K562 (cell line): ENCODE measurements at regions of chr5 and their contacts with region 1.

Region 1: DNA sequence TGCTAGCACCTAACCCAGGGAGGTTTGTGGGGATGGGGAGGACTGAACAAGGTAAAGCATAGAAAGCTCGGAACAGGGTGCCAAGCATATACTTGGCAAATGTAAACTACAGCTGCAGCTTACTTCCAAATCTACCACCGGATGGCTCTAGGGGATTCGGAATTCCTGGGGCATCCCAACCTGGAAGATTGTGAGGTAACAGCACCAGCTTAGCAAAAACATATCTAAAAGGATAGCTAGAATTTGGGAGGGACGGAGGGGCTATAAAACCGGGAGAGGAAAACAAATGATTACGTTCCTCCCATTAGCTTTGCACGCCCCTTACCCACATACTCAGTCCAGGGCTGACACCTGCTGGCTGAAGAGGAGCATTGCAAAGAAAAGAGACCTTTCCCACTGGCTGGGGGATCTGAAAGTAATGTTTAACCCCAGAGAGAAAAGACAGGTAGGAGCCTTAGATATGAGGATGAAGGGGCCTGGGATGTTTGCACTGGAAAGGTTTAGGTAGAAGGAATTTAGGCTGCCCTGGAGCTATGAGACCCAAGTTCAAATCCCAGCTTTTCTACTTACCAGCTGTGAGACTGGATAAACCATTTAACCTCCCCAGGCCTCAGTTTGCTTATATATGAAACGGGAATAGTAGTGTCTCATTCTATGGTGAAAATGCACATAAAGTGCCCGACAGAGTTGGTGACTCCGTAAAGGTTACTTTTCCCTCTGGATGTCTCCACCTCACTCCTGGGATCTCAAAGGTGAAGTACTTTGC is 73.6 kb downstream of the FAM114A2 start:
- DNase-seq: peak; percentile 70 to 80 (median 78)
- ATAC-seq: peak; percentile 90
- H3K4me3 ChIP-seq: no peak overlapping the region
- H3K27ac ChIP-seq: no peak overlapping the region
- H3K4me1 ChIP-seq: no peaks in the 10 kb centered on the region
- H3K27me3 ChIP-seq: peaks cover 0 to 20% of the 10 kb centered on the region in 2 experiments; a peak in 3 of 5 replicates
- CTCF ChIP-seq: peak; percentile 78 to 93 (median 85)
- EP300 ChIP-seq: no peak
- POLR2A ChIP-seq: no peak
- RAD21 ChIP-seq: peak; percentile 90 to 94

Region 2: GRCh38 chr5:152532714-152533113 is 1432.3 kb before region 1 on chr5:
- CTCF ChIA-PET with region 1: interaction called, 9 read pairs
- POLR2A ChIA-PET with region 1: interaction called, 3 read pairs
- in situ Hi-C with region 1: loop called (anchors 10 kb)
- intact Hi-C with region 1: loop called (anchors 1 kb)
- DNase-seq: peak in 3 of 4 experiments; percentile 10 to 55 (median 10)
- ATAC-seq: peak; percentile 54; the same call in 1 of the 3 replicates
- H3K4me3 ChIP-seq: no peak overlapping the region
- H3K27ac ChIP-seq: no peak overlapping the region
- H3K4me1 ChIP-seq: no peaks in the 10 kb centered on the region
- H3K27me3 ChIP-seq: no peaks in the 10 kb centered on the region
- CTCF ChIP-seq: peak in 2 of 3 experiments; percentile 31 to 51; a peak in 3 of 6 replicates
- EP300 ChIP-seq: no peak
- POLR2A ChIP-seq: no peak
- RAD21 ChIP-seq: peak; percentile 72 to 83

Region 3: DNA sequence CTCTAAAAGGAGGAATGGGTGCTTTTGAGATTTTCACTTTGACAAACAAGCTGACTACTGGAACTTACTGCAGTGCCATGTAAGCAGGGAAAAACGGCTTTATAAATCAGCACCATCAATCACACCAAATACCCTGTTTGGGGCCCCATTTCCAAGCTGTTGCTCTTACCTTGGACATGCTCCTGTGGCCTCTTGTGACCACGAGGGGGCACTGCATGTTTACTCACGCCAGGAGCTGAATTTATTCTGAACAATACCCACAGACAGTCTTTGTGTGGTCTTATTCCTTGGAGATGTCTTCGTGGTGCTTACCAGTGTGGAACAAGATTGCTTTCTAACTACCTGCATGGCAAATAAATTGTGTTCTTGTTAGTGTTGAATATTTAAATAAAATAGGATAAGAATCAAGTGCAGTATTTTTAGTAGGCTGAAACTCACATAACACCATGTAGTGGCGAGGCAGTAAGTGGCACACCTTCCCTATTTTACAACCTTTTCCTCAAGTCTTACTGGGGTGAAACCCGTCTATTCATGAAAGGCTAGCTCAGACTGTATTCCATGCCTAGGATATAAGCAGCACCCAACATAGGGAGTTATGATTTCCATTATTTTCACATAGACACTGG is 1404.4 kb before region 1 on chr5:
- CTCF ChIA-PET with region 1: no interaction called
- POLR2A ChIA-PET with region 1: no interaction called
- in situ Hi-C with region 1: no loop called
- intact Hi-C with region 1: loop called (anchors 1 kb)
- DNase-seq: peak; percentile 14 to 49 (median 22)
- ATAC-seq: peak; percentile 55; the same call in 1 of the 3 replicates
- H3K4me3 ChIP-seq: no peak overlapping the region
- H3K27ac ChIP-seq: no peak overlapping the region
- H3K4me1 ChIP-seq: no peaks in the 10 kb centered on the region
- H3K27me3 ChIP-seq: no peaks in the 10 kb centered on the region
- CTCF ChIP-seq: peak; percentile 33 to 63 (median 52)
- EP300 ChIP-seq: no peak
- POLR2A ChIP-seq: no peak
- RAD21 ChIP-seq: peak; percentile 44 to 59

Region 4: DNA sequence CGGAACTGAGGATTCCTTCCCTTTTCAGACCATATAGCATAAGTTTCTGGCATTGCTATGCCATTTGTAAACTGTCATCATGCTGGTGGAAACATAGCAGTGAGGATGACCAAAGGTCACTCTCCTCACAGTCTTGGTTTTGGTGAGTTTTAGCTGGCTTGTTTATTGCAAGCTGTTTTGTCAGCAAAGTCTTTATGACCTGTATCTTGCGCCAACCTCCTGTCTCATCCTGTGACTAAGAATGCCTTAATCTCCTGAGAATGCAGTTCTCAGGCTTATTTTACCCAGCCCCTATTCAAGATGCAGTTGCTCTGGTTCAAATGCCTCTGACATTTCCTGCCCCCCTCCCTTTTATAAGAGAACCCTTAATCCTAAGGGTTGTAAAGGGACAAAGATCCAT is 501.3 kb before region 1 on chr5:
- CTCF ChIA-PET with region 1: no interaction called
- POLR2A ChIA-PET with region 1: no interaction called
- in situ Hi-C with region 1: no loop called
- intact Hi-C with region 1: no loop called
- DNase-seq: no peak
- ATAC-seq: no peak
- H3K4me3 ChIP-seq: no peak overlapping the region
- H3K27ac ChIP-seq: no peak overlapping the region
- H3K4me1 ChIP-seq: no peaks in the 10 kb centered on the region
- H3K27me3 ChIP-seq: no peaks in the 10 kb centered on the region
- CTCF ChIP-seq: no peak
- EP300 ChIP-seq: no peak
- POLR2A ChIP-seq: no peak
- RAD21 ChIP-seq: no peak

Region 5: DNA sequence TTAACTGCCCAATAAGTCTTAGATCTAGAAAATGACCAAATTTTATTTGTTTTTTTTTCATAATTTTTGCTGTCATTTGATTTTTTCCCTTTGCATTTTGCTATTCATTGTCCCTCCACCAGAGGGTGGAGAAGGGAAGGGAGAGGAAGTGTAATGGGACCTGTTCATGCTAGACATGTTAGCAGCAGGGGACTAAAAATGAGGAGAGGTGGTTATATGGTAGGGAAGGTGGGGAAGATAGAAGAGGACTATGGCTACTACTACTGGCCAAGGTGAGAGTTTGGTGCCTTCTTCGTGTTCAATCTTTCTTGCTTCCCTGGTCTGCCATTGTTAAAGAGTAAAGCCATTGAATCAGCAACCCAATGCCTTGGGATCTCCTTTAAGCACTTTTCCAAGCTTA is 468.2 kb before region 1 on chr5:
- CTCF ChIA-PET with region 1: interaction called, 11 read pairs
- POLR2A ChIA-PET with region 1: no interaction called
- in situ Hi-C with region 1: no loop called
- intact Hi-C with region 1: loop called (anchors 1 kb)
- DNase-seq: peak; percentile 7 to 20 (median 16)
- ATAC-seq: peak; percentile 37; the same call in 1 of the 3 replicates
- H3K4me3 ChIP-seq: no peak overlapping the region
- H3K27ac ChIP-seq: no peak overlapping the region
- H3K4me1 ChIP-seq: no peaks in the 10 kb centered on the region
- H3K27me3 ChIP-seq: no peaks in the 10 kb centered on the region
- CTCF ChIP-seq: peak; percentile 30 to 60 (median 41); a peak in 4 of 6 replicates
- EP300 ChIP-seq: no peak
- POLR2A ChIP-seq: no peak
- RAD21 ChIP-seq: peak; percentile 70 to 82

Region 6: GRCh38 chr5:153816870-153817269 is 148.2 kb before region 1 on chr5:
- CTCF ChIA-PET with region 1: no interaction called
- POLR2A ChIA-PET with region 1: no interaction called
- in situ Hi-C with region 1: no loop called
- intact Hi-C with region 1: loop called (anchors 5 kb)
- DNase-seq: no peak
- ATAC-seq: no peak
- H3K4me3 ChIP-seq: no peak overlapping the region
- H3K27ac ChIP-seq: no peak overlapping the region
- H3K4me1 ChIP-seq: no peaks in the 10 kb centered on the region
- H3K27me3 ChIP-seq: no peaks in the 10 kb centered on the region
- CTCF ChIP-seq: no peak
- EP300 ChIP-seq: no peak
- POLR2A ChIP-seq: no peak
- RAD21 ChIP-seq: 0 out of 4 replicates have a peak, but pooled peaks of 1 of the 2 experiments have one; percentile 6

Region 7: GRCh38 chr5:154002093-154002492 is 37.0 kb after region 1 on chr5:
- CTCF ChIA-PET with region 1: no interaction called
- POLR2A ChIA-PET with region 1: no interaction called
- in situ Hi-C with region 1: no loop called
- intact Hi-C with region 1: no loop called
- DNase-seq: no peak
- ATAC-seq: no peak
- H3K4me3 ChIP-seq: no peak overlapping the region
- H3K27ac ChIP-seq: no peak overlapping the region
- H3K4me1 ChIP-seq: no peaks in the 10 kb centered on the region
- H3K27me3 ChIP-seq: no peaks in the 10 kb centered on the region
- CTCF ChIP-seq: no peak
- EP300 ChIP-seq: no peak
- POLR2A ChIP-seq: no peak
- RAD21 ChIP-seq: no peak

Region 8: GRCh38 chr5:154603978-154604679 is 639.1 kb after region 1 on chr5:
- CTCF ChIA-PET with region 1: no interaction called
- POLR2A ChIA-PET with region 1: interaction called, 3 read pairs
- in situ Hi-C with region 1: loop called (anchors 10 kb)
- intact Hi-C with region 1: no loop called
- DNase-seq: no peak
- ATAC-seq: peak; percentile 37
- H3K4me3 ChIP-seq: no peak overlapping the region
- H3K27ac ChIP-seq: no peak overlapping the region
- H3K4me1 ChIP-seq: peaks cover 0 to 4% of the 10 kb centered on the region in 2 experiments; a peak in 1 of 5 replicates
- H3K27me3 ChIP-seq: peaks cover 14 to 38% of the 10 kb centered on the region in 2 experiments; a peak in 4 of 5 replicates
- CTCF ChIP-seq: no peak
- EP300 ChIP-seq: no peak
- POLR2A ChIP-seq: no peak
- RAD21 ChIP-seq: no peak